ENCODE measurements at regions of chr20 and their contacts with region 1.

Region 1: DNA sequence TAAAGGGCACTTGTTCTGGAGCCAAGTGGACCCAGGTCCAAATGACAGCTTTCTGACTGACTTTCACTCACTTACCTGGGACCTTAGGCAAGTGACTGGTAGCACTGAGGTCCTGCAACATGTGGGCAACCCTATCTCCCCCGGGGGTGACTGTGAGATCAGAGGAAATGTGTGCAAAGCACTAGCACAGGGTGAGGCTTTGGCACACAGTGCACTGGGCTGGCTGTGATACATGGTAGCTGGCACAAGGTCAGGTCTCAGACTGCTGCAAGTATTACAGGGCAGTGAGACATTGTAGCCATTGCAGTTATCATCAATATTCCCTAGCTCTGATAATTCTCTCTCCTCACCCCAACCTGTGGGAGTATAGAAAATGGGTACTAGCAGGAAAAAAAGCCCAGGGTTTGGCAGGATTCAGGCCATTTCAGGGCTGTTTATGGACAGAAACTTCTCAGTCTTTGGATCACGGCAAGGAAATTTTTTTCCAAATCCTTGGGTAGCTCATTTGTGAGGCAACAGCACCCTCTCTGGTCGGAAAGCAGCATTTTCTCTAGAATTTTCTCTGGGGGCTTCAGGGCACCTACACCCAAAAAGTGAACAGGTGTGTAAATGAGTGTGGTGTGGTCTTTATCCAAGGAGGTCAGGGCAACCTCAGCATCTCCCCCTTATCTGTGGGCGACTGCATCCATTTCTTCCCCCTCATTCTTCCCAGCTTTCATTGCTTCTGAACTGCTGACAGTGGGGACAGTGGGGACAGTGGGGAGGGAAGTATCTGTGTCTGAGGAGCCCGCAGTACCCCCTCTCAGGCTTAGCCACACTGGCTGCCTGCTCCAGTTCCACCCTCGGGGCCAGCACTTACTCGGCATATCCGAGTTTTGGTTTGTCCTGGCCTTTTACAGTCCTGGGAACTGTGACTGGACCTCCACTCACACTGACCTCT is 148.7 kb upstream of the PHACTR3 start:
- DNase-seq: no peak
- H3K4me3 ChIP-seq: no peak overlapping the region
- H3K27ac ChIP-seq: no peak overlapping the region
- H3K4me1 ChIP-seq: peaks cover 0 to 8% (median 5%) of the 10 kb centered on the region in 4 donors
- H3K27me3 ChIP-seq: peaks cover 0 to 14% of the 10 kb centered on the region in 2 donors
- CTCF ChIP-seq: peak; percentile 60 to 67

Region 2: GRCh38 chr20:58870239-58871014 is 585.2 kb before region 1 on chr20:
- intact Hi-C with region 1: loop called (anchors 5 kb)
- DNase-seq: peak; percentile 45 to 77
- H3K4me3 ChIP-seq: no peak overlapping the region
- H3K27ac ChIP-seq: no peak overlapping the region
- H3K4me1 ChIP-seq: no peaks in the 10 kb centered on the region
- H3K27me3 ChIP-seq: peaks cover 0 to 5% of the 10 kb centered on the region in 2 donors
- CTCF ChIP-seq: peak; percentile 90

Region 3: DNA sequence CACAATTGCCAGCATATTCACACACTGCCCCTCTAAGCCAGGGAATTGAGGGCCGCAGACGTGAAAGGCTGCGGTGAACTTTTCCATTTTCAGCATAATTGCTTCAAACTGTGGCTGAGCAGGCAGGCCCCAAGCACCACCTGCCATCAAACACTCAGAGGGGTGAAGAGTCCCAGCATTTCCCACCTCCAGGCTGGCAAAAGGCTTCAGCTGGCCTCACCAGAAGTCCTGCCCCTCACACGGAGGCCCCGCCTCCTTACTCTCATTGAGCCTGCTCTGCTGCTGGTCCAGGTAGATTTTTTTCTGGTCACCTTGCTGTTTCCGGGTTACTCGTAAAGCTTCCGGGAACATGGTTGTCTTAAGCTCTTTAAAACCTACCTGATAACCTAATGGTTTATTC is 361.1 kb before region 1 on chr20:
- intact Hi-C with region 1: loop called (anchors 5 kb)
- DNase-seq: no peak
- H3K4me3 ChIP-seq: no peak overlapping the region
- H3K27ac ChIP-seq: no peak overlapping the region
- H3K4me1 ChIP-seq: no peaks in the 10 kb centered on the region
- H3K27me3 ChIP-seq: peaks cover 0 to 4% of the 10 kb centered on the region in 2 donors
- CTCF ChIP-seq: no peak

Measured in tibial artery (tissue), 4 donors.